ENCODE measurements at regions of chr5 and their contacts with region 1.

Region 1: GRCh38 chr5:135829681-135830383 is 4.6 kb upstream of the SLC25A48 start:
- DNase-seq: peak; percentile 77
- ATAC-seq: peak; percentile 57
- H3K4me3 Mint-ChIP-seq: no peak overlapping the region
- H3K27ac Mint-ChIP-seq: no peak overlapping the region
- H3K4me1 Mint-ChIP-seq: peaks cover 3% of the 10 kb centered on the region
- H3K27me3 Mint-ChIP-seq: peaks cover 44% of the 10 kb centered on the region

Region 2: GRCh38 chr5:135560858-135561257 is 269.0 kb before region 1 on chr5:
- CTCF ChIA-PET with region 1: interaction called, 27 read pairs
- POLR2A ChIA-PET with region 1: no interaction called
- intact Hi-C with region 1: loop called (anchors 1 kb)
- DNase-seq: peak; percentile 90
- ATAC-seq: peak; percentile 96
- H3K4me3 Mint-ChIP-seq: no peak overlapping the region
- H3K27ac Mint-ChIP-seq: no peak overlapping the region
- H3K4me1 Mint-ChIP-seq: peaks cover 8% of the 10 kb centered on the region
- H3K27me3 Mint-ChIP-seq: peaks cover 32% of the 10 kb centered on the region

Region 3: DNA sequence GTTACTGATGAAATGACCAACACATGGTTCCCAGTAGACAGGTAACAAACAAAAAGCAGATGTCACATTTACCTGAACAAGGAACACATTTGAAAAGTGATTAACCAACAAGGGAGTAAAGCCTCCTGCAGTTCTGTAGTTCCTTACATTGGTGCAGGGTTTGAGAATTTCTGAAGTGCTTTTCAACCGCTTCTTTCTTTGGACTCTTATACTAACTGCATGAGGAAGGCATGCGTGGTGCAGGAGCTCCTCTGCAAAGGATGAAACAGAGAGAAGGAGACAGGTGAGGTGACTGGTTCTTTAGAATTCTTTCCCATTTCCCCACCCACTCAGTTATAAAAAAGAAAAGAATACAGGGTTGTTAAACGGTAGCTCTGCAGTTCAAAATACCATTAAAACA is 70.4 kb after region 1 on chr5:
- CTCF ChIA-PET with region 1: no interaction called
- POLR2A ChIA-PET with region 1: no interaction called
- intact Hi-C with region 1: no loop called
- DNase-seq: no peak
- ATAC-seq: no peak
- H3K4me3 Mint-ChIP-seq: no peak overlapping the region
- H3K27ac Mint-ChIP-seq: no peak overlapping the region
- H3K4me1 Mint-ChIP-seq: peaks cover 8% of the 10 kb centered on the region
- H3K27me3 Mint-ChIP-seq: peaks cover 57% of the 10 kb centered on the region